Endothelial cell of umbilical vein (primary cell): ENCODE measurements at regions of chr3 and their contacts with region 1.

Region 1: DNA sequence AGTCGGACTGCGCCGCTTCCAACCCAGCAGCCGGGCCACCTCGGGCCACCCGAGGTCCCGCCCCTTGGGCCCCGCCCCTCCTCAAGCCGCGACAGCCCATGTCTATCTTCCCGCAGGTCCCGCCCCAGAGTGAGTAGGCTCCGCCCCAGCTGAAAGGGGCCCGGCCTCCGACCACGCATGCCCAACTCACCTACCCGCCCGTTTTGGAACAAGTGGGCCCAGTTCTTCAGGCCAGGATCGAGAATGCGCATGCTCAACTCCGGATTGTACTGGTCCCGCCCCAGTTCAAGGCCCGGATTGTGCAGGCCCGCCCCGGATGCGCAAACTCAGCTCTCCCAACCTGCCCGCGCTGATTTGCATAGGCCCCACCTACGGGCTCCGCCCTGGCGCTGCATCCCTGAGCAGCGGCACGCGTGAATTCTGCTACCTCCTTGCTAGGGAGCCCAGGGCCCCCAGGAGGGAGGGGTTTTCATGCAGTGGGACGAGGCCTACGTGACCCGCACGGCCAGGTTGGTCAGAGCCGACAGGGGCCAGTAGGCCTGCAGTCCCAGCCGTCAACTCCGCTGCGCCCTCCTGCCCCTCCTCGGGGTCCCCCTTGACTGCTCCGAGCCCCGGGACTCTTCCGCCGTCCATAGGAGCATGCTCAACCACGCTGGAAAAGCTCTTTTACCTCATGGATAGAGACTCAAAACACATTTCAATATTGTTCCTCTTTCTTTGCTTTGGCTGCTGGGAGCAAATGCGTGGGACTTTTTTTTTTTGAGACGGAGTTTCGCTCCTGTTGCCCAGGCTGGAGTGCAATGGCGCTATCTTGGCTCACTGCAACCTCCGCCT is at the start of gene PFKFB4:
- DNase-seq: peak; percentile 99
- H3K4me3 ChIP-seq: peak within 1 kb of the TSS; percentile 43 to 63 (median 53)
- H3K27ac ChIP-seq: no peak within 1 kb of the TSS
- H3K4me1 ChIP-seq: peaks cover 12% of the 10 kb centered on the region
- H3K27me3 ChIP-seq: no peaks in the 10 kb centered on the region
- CTCF ChIP-seq: no peak
- POLR2A ChIP-seq: peak; percentile 24
- total RNA-seq, gene PFKFB4: 4.2 and 4.9 TPM in 2 replicates

Region 2: GRCh38 chr3:48507351-48508061 is 49.5 kb before region 1 on chr3:
- CTCF ChIA-PET with region 1: interaction called, 7 read pairs
- POLR2A ChIA-PET with region 1: no interaction called
- dilution Hi-C with region 1: no loop called
- intact Hi-C with region 1: loop called (anchors 2 kb)
- DNase-seq: peak; percentile 72
- H3K4me3 ChIP-seq: no peak overlapping the region
- H3K27ac ChIP-seq: no peak overlapping the region
- H3K4me1 ChIP-seq: peaks cover 21% of the 10 kb centered on the region
- H3K27me3 ChIP-seq: no peaks in the 10 kb centered on the region
- CTCF ChIP-seq: peak; percentile 41 to 74
- POLR2A ChIP-seq: no peak

Region 3: DNA sequence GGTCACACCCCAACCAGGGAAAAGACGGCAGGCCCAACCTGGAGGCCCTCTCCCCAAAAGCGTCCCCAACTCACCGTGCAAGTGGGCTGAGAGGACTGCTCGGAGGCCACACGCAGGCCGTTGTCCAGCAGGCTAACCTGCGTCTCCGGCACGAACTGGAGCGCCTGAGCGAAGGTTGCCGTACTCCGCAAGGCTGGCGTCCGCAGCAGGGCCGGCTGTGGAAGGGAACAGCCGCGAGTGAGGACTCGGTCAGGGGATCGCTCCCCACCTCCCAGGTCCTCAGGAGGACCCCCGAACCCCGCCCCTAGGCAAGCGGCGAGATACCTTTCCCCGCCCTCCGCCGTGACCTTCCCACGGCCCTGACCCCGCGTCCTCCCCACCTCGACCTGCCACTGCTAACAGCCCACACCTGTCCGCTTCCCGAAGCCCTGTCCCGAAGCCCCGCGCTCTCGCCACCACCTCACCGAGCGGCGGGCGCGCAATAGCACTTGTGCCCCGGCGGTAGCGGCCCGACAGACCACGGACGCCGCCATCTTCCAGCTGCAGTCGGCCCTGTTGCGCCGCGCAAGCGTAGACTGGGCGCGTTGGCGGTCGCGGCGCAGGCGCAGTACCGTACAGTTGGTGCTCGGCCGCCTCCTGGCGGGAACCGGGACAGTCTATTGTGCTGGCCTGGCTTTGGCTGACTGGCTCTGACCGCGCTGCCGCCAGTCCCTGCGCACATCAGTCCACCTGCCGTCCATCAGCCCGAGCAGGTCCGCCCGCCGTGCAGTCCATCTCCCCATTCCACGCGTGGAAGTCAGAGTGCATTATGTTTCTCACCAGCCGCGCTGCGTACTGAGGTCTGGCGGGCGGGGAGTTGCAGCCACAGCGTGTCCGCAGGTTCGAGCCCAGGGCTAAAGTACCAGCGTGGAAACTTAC is 52.3 kb after region 1 on chr3 and contains the start of gene UQCRC1:
- CTCF ChIA-PET with region 1: interaction called, 6 read pairs
- POLR2A ChIA-PET with region 1: no interaction called
- dilution Hi-C with region 1: no loop called
- intact Hi-C with region 1: loop called (anchors 2 kb)
- DNase-seq: peak; percentile 96
- H3K4me3 ChIP-seq: peak within 1 kb of the TSS; percentile 52 to 85 (median 73)
- H3K27ac ChIP-seq: peak within 1 kb of the TSS; percentile 9
- H3K4me1 ChIP-seq: peaks cover 13% of the 10 kb centered on the region
- H3K27me3 ChIP-seq: no peaks in the 10 kb centered on the region
- CTCF ChIP-seq: peak; percentile 52 to 84
- POLR2A ChIP-seq: peak; percentile 96
- total RNA-seq, gene UQCRC1: 184 and 186 TPM in 2 replicates

Region 4: DNA sequence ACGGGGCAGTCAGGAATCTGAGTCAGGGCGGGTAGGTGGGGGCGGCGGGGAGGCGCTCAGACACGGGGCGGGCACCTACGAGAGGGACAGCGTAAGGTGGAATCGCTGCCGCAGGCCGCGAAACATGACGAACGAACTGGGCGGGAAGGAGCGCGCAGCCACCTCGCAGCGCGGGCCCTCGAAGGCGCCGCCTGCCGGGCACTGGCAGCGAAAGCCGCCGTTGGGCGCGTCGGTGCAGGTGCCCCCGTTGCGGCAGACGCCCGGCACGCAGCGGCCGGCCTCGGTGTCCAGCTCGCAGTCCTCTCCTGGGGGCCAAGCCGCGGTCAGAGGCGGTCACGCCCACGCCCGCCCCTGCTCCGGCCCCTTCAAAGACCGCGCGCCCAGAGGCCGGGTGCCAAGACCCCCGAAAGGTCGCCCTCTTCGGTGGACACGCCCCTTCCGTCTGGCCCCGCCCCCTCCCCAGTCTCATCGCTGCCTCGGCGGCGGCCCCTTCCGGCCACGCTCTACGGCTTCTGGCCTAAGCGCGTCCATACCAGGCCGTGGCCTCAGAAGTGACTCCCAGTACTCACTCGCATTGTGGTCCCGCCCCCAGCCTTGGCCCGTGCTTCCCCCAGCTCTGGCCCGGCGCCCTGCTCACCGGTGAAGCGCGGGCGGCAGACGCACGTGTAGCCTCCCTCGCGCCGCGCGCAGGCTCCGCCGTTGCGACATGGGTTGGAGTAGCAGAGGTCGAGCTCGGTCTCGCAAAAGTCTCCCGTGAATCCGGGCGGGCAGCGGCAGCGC is 99.2 kb after region 1 on chr3:
- CTCF ChIA-PET with region 1: interaction called, 3 read pairs
- POLR2A ChIA-PET with region 1: no interaction called
- dilution Hi-C with region 1: no loop called
- intact Hi-C with region 1: loop called (anchors 2 kb)
- DNase-seq: peak; percentile 73
- H3K4me3 ChIP-seq: peak overlapping the region; percentile 8 to 46 (median 18)
- H3K27ac ChIP-seq: no peak overlapping the region
- H3K4me1 ChIP-seq: peaks cover 7% of the 10 kb centered on the region
- H3K27me3 ChIP-seq: no peaks in the 10 kb centered on the region
- CTCF ChIP-seq: peak; percentile 75 to 85
- POLR2A ChIP-seq: no peak